Activated CD4-positive, alpha-beta T cell treated with anti-CD3 and anti-CD28 coated beads, Interleukin-2, amount 10 ng/mL, durations not matched to agents 24 days and 14 days (primary cell): ENCODE measurements at regions of chr10 and their contacts with region 1.

Region 1: GRCh38 chr10:102132563-102133372 is at the start of gene PPRC1:
- DNase-seq: peak; percentile 99
- H3K4me3 Mint-ChIP-seq: peak within 1 kb of the TSS; percentile 97
- H3K27ac Mint-ChIP-seq: peak within 1 kb of the TSS; percentile 100
- H3K4me1 Mint-ChIP-seq: peaks cover 33% of the 10 kb centered on the region
- H3K27me3 Mint-ChIP-seq: no peaks in the 10 kb centered on the region
- total RNA-seq, gene PPRC1: 111 and 113 TPM in 2 replicates

Region 2: GRCh38 chr10:102055647-102056419 is 76.9 kb before region 1 on chr10 and contains the start of gene ARMH3:
- intact Hi-C with region 1: loop called (anchors 2 kb)
- DNase-seq: peak; percentile 97
- H3K4me3 Mint-ChIP-seq: peak within 1 kb of the TSS; percentile 98
- H3K27ac Mint-ChIP-seq: peak within 1 kb of the TSS; percentile 95
- H3K4me1 Mint-ChIP-seq: peaks cover 28% of the 10 kb centered on the region
- H3K27me3 Mint-ChIP-seq: no peaks in the 10 kb centered on the region
- total RNA-seq, gene ARMH3: 20.9 and 23.2 TPM in 2 replicates

Region 3: GRCh38 chr10:102064868-102065560 is 67.8 kb before region 1 on chr10 and contains the start of gene HPS6:
- intact Hi-C with region 1: loop called (anchors 1 kb)
- DNase-seq: peak; percentile 97
- H3K4me3 Mint-ChIP-seq: peak within 1 kb of the TSS; percentile 87
- H3K27ac Mint-ChIP-seq: peak within 1 kb of the TSS; percentile 94
- H3K4me1 Mint-ChIP-seq: peaks cover 23% of the 10 kb centered on the region
- H3K27me3 Mint-ChIP-seq: no peaks in the 10 kb centered on the region
- total RNA-seq, gene HPS6: 22.7 and 25.8 TPM in 2 replicates

Region 4: DNA sequence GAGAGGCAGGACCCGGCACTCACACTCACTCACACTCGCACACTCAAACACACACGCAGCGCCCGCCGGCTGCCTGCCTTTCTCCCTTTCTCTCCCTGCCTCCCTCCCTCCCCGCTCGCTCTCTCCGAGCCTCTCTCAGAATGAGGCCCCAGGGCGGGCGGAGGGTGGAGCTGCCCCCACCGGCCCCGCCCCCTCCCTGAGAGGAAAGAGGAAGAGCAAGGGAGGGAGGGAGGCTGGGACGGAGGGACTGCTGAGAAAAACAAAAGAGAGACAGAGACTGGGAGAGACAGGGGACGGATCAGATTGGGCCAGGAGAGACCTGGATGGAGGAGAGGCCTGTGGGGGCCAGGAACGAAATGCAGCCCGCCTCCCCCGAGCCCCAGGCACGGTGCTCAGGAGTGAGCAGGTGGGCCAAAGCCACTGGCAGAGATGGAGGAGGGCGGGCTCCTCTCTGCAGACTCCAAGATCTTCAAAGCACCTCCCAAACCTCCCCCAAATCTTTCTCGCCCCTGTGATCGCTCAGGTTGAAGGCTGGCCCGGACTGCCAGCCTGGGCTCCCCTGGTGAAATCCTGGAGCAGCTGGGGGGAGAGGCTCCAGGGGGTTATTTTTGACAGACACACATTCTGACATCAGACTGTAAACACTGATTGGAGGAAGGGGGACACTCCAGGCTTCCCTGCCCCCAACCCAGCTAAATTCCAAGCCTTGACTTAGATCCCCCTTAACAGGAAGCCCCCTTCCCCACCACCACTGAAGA is 17.7 kb before region 1 on chr10:
- intact Hi-C with region 1: loop called (anchors 1 kb)
- DNase-seq: peak; percentile 94
- H3K4me3 Mint-ChIP-seq: peak overlapping the region; percentile 94
- H3K27ac Mint-ChIP-seq: peak overlapping the region; percentile 98
- H3K4me1 Mint-ChIP-seq: peaks cover 53% of the 10 kb centered on the region
- H3K27me3 Mint-ChIP-seq: no peaks in the 10 kb centered on the region

Region 5: GRCh38 chr10:102120142-102120990 is 12.4 kb before region 1 on chr10 and contains the start of gene LDB1:
- intact Hi-C with region 1: loop called (anchors 1 kb)
- DNase-seq: peak; percentile 91
- H3K4me3 Mint-ChIP-seq: peak within 1 kb of the TSS; percentile 94
- H3K27ac Mint-ChIP-seq: peak within 1 kb of the TSS; percentile 98
- H3K4me1 Mint-ChIP-seq: peaks cover 49% of the 10 kb centered on the region
- H3K27me3 Mint-ChIP-seq: no peaks in the 10 kb centered on the region
- total RNA-seq, gene LDB1: 76.4 and 78.2 TPM in 2 replicates

Region 6: GRCh38 chr10:102151774-102152544 is 19.2 kb after region 1 on chr10 and contains the start of gene NOLC1:
- intact Hi-C with region 1: loop called (anchors 1 kb)
- DNase-seq: peak; percentile 100
- H3K4me3 Mint-ChIP-seq: peak within 1 kb of the TSS; percentile 99
- H3K27ac Mint-ChIP-seq: peak within 1 kb of the TSS; percentile 99
- H3K4me1 Mint-ChIP-seq: peaks cover 45% of the 10 kb centered on the region
- H3K27me3 Mint-ChIP-seq: peaks cover 2% of the 10 kb centered on the region
- total RNA-seq, gene NOLC1: 268 and 281 TPM in 2 replicates

Region 7: DNA sequence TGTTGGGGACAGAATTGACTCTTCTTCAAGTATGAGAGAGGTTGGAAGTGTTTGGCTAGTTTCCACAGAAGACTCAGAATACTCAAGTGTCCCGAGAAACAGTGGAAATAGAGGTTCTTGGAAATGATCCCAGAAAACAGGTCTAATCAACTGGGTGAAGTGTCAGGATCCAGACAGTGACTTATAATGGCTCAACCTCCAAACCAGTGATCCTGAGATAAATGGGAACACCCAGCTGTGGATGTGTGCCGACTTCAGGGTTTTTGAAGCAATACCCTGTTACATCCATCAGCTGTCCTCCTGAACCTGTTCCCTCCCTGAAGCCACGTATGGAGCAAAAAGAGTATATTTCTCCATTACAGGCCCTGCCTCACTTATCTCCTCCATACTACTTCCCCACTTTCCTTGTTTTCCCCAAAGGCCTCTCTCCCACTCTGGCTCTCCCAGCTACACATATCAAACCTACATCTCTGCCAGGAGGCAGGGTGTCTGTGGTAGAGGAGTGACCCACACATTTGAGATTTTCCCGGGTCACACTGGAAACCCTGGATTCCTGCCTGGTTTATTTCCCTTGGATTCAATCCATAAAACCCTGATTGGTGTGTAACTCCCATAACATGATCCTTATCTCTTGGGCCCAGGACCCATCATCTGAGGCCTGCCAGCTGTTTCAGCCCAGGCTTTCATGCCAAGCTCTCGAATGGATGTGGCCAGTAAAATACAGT is 75.7 kb after region 1 on chr10:
- intact Hi-C with region 1: no loop called
- DNase-seq: no peak
- H3K4me3 Mint-ChIP-seq: no peak overlapping the region
- H3K27ac Mint-ChIP-seq: no peak overlapping the region
- H3K4me1 Mint-ChIP-seq: no peaks in the 10 kb centered on the region
- H3K27me3 Mint-ChIP-seq: peaks cover 6% of the 10 kb centered on the region

Region 8: DNA sequence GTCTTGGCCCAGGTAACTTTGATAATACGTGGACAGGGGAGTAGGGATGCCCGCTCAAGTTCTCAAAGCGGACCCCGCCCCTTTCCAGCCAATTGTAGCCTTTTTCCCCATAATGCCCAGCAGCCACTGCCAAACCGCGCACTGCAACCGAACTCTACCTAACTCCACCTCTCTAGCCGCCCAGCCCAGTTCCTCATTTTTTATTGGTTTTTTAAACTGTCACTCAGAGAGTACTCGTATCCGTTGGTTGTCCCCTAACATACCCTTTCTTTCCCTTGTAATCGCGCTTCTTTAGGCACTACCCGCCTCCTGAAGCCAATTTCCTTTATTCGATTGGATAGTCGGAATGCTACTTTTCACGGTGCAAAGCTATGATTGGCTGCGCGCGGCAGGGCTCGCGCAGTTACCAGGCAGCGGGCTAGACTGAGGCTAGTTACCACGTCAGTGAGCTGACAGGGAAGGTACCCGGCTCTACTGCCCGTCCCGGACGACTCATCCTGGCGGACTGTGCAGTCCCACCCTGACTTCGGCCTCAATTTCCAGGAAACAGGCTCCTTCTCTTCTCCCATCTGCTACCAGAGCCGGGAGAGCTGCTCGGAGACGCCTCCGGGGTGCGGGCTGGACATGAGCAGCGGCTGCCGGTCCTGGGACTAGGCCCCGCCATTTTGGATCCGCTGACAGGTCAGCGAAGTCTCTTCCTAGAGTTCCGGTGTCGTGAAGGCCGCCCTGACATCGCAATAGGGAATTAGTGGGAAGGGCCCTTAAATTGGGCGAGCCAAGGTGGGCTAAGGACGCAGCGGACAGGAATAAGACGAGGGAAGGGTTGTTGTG is 112.5 kb after region 1 on chr10 and contains the start of gene GBF1:
- intact Hi-C with region 1: loop called (anchors 1 kb)
- DNase-seq: peak; percentile 97
- H3K4me3 Mint-ChIP-seq: peak within 1 kb of the TSS; percentile 100
- H3K27ac Mint-ChIP-seq: peak within 1 kb of the TSS; percentile 94
- H3K4me1 Mint-ChIP-seq: peaks cover 40% of the 10 kb centered on the region
- H3K27me3 Mint-ChIP-seq: peaks cover 14% of the 10 kb centered on the region
- total RNA-seq, gene GBF1: 45.2 and 47.7 TPM in 2 replicates